ENCODE measurements at regions of chrX and their contacts with region 1.

Region 1: DNA sequence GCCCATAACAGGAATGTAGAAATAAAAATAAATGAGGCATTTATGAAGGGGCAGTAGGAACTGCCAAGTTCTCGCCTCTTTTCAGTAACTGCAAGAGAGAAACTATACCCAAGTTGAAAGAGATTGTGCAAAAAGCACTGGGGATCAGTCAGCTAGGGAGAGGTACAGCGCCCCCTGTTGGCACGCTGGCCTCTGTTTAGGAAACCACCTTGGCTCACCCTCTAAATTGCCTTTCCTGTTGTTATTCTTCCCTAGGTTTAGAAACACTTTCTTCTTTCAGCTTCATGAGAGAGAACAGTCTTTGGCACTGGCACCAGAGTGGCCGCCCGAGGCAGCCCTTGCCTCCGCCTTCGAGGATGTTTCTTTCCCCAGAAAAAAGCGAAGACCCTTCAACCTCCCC is 348.5 kb downstream of the MID1IP1 start:
- H3K4me3 ChIP-seq: no peak overlapping the region
- H3K27ac ChIP-seq: no peak overlapping the region
- H3K4me1 ChIP-seq: no peaks in the 10 kb centered on the region
- CTCF ChIP-seq: no peak

Region 2: GRCh38 chrX:38768079-38768478 is 381.7 kb before region 1 on chrX:
- CTCF ChIA-PET with region 1: interaction called, 10 read pairs
- POLR2A ChIA-PET with region 1: no interaction called
- H3K4me3 ChIP-seq: no peak overlapping the region
- H3K27ac ChIP-seq: no peak overlapping the region
- H3K4me1 ChIP-seq: no peaks in the 10 kb centered on the region
- CTCF ChIP-seq: no peak

Region 3: DNA sequence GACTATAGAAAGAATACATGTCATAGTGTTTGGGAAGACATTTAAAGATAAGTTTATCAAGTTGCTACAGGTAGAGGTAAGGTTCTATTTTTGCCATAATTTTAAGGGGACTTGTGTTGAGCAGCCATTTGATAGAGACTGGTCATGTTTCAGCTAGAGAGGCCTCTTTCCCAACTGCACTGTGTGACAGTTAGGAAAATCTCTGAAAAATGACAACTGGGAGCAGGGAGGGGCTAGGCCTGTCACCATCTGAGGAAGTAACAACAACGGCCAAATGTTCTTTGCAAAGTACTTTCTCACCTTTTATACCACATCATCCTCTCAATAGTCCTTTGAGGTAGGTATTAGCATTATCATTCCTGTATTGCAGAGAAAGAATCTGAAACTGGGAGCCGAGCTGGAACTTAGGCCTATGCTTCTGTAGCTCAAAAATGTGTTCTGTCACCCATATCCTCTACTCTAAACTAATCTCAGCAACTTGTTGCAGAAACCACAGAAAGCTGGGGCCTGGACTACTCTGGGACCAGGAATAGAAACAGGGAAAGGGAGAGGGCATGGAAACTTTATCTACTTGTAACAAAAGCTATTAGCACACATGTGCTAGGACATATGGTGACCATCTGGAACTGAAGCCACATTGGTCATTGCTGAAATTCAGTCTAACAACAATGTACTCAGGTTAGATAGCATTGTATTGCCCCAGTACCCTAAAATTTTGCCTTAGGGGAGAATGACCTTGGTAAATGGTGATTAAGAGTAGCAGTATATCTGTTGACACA is 149.6 kb before region 1 on chrX:
- CTCF ChIA-PET with region 1: no interaction called
- POLR2A ChIA-PET with region 1: no interaction called
- H3K4me3 ChIP-seq: no peak overlapping the region
- H3K27ac ChIP-seq: no peak overlapping the region
- H3K4me1 ChIP-seq: no peaks in the 10 kb centered on the region
- CTCF ChIP-seq: no peak

Region 4: DNA sequence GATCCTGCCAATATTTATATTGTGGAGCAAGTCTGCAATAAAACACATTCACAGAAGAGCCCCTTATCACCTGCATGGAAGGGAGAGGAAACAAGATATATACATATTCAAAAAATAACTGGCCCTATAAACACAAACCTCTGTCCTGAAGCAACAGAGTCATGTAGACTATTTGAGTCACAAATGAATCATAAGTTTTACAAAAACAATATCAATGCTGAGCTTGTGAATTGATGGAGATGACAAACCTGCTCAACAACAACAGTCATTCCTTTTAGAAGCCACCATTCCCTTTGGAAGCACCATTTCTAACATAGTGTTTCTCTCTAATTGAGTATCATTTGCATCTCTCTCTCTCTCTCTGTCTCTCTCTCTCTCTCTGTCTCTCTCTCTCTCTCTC is 34.6 kb before region 1 on chrX:
- CTCF ChIA-PET with region 1: no interaction called
- POLR2A ChIA-PET with region 1: no interaction called
- H3K4me3 ChIP-seq: no peak overlapping the region
- H3K27ac ChIP-seq: no peak overlapping the region
- H3K4me1 ChIP-seq: no peaks in the 10 kb centered on the region
- CTCF ChIP-seq: no peak

Region 5: DNA sequence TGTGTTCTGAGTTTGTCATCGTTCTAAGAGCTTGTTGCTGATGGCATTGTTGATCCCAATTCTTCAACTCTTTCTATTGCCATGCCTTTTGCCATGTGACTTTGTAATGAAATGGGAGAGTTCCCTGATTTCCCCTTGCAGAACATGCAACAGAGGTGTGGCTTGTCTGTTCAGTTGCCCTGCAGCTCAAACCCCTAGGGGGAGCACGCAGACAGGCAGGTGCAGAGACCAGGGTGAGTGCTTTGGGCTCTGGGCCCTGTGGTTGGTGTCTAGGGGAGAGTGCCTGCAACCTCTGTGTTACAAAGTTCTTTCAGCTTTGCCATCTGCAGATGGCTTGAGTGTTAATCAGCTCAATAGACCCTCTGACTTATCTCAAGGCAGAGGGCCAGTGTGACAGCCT is 15.8 kb before region 1 on chrX:
- CTCF ChIA-PET with region 1: interaction called, 23 read pairs
- POLR2A ChIA-PET with region 1: no interaction called
- H3K4me3 ChIP-seq: no peak overlapping the region
- H3K27ac ChIP-seq: no peak overlapping the region
- H3K4me1 ChIP-seq: no peaks in the 10 kb centered on the region
- CTCF ChIP-seq: no peak

Region 6: GRCh38 chrX:39242187-39242586 is 92.4 kb after region 1 on chrX:
- CTCF ChIA-PET with region 1: interaction called, 13 read pairs
- POLR2A ChIA-PET with region 1: no interaction called
- H3K4me3 ChIP-seq: no peak overlapping the region
- H3K27ac ChIP-seq: no peak overlapping the region
- H3K4me1 ChIP-seq: no peaks in the 10 kb centered on the region
- CTCF ChIP-seq: no peak